Left ventricle myocardium superior (tissue), 1 donor: ENCODE measurements at regions of chr13 and their contacts with region 1.

Region 1: GRCh38 chr13:50529154-50529882 is 314.2 kb downstream of the DLEU7 start:
- DNase-seq: peak; percentile 94
- ATAC-seq: peak; percentile 96

Region 2: GRCh38 chr13:49300739-49301589 is 1228.4 kb before region 1 on chr13:
- intact Hi-C with region 1: no loop called
- DNase-seq: peak; percentile 50
- ATAC-seq: peak; percentile 69

Region 3: DNA sequence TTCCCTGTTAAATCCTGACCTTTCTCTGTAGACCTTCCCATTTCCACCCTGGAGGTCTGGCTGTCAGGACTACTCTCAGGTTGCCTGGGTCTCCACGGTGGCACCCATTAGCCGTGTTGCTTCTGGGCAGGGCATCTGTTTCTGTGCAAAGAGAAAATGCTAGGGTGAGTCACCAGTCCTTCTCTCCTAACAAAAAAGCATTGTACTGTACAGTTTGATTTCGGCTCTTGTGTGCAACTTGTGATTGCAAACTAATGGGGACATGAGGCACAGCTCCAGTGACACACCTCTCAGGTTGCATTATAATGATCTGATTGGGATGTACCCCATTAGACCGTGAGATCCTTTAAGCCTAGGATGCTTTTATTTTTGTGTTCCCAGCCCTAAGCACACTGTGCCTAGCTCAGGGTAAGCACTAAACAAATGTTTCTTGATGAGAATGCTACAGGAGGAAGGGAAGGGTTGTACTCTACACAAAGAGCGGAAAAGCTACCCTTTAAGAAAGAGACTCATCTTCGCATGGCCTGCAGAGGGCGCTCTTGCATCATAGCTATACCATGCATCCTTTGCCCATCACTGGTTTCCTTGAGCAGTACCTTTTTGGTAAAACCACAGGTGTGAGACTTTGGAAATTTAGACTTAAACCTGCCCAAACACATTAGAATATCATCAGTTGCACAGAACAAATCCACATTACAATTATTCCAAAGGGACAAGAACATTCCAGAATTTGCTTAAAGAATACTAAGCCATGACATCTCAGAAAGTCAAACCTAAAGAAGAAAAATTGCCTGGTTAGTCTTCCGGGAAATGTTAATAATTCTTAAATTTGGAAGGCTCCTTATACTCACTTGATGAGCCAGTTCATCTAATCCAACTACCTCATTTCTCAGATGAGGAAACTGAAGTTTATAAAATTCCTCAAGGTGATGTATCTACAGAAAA is 552.7 kb before region 1 on chr13:
- intact Hi-C with region 1: loop called (anchors 10 kb)
- DNase-seq: peak; percentile 82
- ATAC-seq: peak; percentile 82

Region 4: DNA sequence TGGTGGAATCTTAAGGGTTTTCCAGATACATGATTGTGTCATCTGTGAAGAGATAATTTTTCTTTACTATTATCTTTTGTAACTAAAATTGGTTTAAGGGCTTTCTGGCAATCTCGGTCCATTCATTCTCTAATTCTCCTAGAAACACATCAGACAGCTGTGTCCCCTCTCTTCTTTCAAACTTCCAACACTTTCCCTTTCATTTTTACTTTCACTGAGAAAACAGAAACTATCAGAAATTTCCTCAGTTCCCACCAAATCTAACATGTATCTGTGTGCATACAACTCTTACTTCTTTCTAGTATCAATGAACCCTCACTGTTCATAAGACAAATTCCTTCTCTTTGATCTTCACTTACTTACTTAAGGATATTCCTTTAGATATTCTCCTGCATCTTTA is 473.9 kb before region 1 on chr13:
- intact Hi-C with region 1: no loop called
- DNase-seq: no peak
- ATAC-seq: no peak

Region 5: DNA sequence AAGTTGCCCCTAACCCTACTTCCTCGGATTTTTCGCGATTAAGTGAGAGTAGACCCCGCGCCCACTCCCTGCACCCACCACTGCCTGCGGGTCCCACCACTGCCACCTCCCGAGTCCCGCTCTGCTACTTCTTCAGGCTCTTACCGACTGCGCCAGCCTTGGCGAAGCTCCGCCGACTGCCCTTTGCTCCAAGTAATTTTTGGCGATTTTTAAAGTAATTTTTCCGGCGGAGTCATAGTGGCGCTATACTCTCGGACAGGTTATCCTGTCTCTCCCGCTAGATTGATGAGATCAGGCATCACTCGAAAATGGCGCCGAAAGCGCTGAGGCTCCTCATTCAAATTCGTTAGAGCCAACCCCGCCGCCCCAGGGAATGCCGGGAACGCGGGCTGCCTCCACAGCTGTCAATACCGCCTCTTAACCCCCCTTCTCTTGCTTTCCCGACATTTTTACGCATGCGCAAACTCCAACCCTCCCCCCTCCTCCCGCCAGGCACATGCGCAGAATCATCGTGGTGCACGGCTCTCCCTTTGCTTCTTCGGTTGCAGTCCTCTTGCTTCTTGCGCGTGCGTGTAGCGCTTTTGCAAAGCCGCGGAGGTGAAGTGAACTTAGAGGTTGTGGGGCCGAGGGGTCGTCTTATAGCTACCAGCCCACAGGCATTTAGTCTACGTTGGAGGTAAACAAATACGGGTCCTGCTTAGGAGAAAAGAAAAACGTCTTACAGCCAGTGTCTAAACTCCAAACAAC is 447.5 kb before region 1 on chr13:
- intact Hi-C with region 1: loop called (anchors 10 kb)
- DNase-seq: peak; percentile 97
- ATAC-seq: peak; percentile 96

Region 6: DNA sequence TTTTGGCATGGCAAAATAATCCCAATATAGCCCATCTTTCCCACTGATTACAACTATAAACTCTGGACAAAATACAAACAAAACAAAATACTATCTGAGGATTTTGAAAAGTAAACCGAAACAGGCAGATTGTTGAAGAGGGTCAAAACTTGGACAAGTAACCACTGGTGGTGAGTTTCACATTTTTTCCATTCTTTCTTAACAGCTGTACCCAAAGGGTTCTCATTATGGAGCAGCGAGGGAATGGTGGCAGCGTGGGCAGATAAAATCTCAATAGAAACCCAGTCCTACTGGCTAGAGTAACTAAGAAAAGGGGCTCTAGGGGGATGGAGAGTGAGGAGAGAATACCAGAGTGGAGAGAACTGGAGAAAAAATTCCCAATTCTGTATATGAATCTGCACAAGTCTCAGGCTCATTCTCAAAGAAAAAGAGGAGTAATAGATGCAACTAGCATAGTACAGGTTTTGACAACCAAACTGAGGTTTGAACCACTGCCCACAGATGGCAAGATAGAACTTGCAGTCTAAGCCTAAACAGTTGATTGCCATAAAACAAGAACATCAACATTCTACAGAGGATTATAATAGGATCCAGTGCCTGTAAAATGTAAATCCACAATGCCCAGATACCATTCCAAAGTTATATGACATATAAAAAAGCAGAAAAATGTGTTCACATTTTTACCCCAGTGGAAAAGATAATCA is 229.6 kb before region 1 on chr13:
- intact Hi-C with region 1: no loop called
- DNase-seq: no peak
- ATAC-seq: no peak

Region 7: GRCh38 chr13:50393628-50394027 is 135.7 kb before region 1 on chr13:
- intact Hi-C with region 1: loop called (anchors 10 kb)
- DNase-seq: no peak
- ATAC-seq: peak; percentile 71

Region 8: DNA sequence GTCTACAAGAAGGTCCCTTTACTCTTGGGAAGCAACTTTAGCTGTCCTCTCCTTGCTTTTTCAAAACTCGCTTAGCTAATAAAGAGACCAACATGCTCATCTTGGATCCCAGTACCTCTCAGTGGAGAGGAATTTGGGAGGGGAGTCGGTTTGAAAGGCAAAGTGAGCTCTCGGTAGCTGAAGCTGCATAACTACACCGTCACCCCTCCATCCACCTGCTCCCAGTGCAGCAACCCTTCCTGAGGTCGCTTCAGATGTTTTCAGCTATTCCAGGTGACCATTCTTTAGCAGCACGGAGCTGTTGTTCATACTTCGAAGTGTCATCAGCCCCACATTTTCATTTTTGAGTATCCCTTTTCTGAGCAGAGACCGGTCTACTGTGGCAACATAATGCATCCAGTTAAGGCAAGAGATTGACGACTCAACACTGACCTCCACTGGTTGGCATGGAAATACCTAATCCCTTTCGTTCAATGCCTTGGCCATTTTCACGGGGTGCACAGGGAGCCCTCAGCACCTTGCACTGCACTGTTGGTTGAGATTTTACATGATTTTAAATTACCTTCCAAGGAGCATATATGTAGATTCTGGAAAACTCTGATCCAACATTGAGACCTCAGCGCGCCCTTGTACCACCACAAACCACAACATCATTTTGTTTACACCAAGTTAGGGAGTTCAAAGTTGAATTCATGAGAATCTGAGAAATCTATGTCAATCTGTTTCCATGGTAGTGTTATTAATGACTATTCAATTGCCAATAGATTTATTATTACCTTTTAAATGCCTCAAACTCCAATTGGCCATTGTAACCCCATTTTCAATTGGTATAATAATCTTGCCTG is 272.0 kb after region 1 on chr13:
- intact Hi-C with region 1: loop called (anchors 5 kb)
- DNase-seq: no peak
- ATAC-seq: peak; percentile 96

Region 9: DNA sequence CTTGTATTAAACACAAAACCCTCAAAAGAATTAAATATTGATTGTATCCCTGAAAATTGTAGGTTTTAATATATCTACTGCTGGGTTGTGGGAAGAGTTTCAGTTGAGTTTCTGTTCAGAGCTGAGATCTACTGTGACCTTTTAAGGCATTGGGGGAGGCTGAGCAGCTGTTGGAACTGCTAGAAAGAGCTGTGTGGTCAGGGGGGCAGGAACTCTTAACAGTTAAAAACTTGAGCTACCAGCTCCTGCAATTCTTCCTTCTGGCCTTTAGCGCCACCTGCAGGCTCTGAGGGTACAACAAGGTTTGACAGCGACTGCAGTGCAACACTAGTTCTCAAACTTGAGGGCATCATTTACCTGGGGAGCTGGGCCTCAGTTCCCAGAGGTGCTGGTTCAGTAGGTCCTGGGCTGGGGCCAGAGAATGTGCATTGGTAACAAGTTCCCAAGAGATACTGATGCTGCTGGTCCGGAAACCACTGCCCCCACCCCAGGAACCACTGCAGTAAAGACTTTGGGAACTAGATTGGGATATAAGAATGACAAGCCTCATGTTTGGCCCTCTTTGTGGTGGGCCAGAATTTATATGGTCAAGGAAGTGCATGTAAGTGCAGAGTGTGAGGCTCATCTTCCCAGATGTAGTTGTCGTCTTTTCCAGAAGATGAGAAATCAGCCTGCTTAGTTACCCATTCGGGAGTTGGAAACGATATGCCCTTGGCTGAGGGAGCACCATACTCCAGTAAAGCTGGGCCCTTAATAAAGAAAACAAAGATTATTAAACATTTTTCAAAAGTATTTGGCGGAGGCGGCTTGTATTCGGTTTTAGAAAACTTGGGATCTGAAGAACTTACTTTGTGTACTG is 382.8 kb after region 1 on chr13:
- intact Hi-C with region 1: loop called (anchors 10 kb)
- DNase-seq: peak; percentile 91
- ATAC-seq: peak; percentile 41